Activated naive CD4-positive, alpha-beta T cell treated with anti-CD3 and anti-CD28 coated beads, Interleukin-2, amount 10 ng/mL, durations not matched to agents 7 days and 5 days (primary cell): ENCODE measurements at regions of chr12 and their contacts with region 1.

Region 1: GRCh38 chr12:93742110-93742934 is 65.1 kb downstream of the CRADD start:
- DNase-seq: peak; percentile 82
- H3K4me3 Mint-ChIP-seq: peak overlapping the region; percentile 87
- H3K27ac Mint-ChIP-seq: peak overlapping the region; percentile 98
- H3K4me1 Mint-ChIP-seq: peaks cover 65% of the 10 kb centered on the region
- H3K27me3 Mint-ChIP-seq: peaks cover 10% of the 10 kb centered on the region

Region 2: GRCh38 chr12:93569656-93570551 is 172.4 kb before region 1 on chr12:
- CTCF ChIA-PET with region 1: interaction called, 12 read pairs
- DNase-seq: peak; percentile 89
- H3K4me3 Mint-ChIP-seq: peak overlapping the region; percentile 81
- H3K27ac Mint-ChIP-seq: peak overlapping the region; percentile 93
- H3K4me1 Mint-ChIP-seq: peaks cover 39% of the 10 kb centered on the region
- H3K27me3 Mint-ChIP-seq: peaks cover 18% of the 10 kb centered on the region

Region 3: DNA sequence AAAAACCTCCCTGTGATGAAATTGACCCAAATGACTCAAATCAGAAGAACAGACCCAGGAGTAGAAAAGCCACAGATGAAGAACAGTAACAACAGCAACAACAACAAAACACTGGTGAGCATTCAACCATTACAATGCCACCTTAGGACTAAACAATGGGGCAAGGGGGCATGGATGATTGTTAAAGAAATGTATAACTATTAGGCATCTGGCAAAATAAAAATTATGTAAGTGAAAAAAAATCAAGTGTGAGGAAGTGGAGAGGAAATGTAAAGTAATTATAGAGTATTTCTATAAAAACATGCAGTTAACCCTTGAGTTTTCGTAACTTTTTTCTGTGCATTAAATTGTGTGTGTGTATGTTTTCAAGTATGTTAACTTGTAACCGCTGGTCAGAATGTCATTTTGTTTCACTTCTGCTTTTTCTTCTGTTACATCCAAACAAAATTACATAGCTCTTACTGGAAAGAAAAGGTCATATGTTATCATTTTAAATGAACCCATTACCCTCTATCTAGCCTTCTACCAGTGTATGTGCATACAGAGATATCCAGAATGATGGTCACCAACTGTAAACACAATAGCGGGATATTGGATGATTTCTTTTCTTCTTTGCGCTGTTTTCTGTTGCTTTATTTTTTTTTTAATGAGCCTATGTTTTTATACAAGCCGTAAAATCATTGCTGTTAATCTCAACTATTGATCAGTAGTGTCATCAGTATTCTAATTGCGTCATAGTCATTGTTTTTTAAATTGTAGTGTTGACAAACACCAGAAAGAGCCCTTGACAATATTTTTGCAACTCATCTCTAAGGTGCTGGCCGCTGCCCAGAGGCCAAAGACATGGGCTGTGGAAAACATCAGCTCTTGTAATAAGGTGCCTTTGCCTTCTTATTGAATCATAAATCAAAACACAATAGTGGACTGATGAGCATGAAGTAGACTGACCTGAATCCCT is 105.5 kb after region 1 on chr12:
- CTCF ChIA-PET with region 1: no interaction called
- DNase-seq: no peak
- H3K4me3 Mint-ChIP-seq: no peak overlapping the region
- H3K27ac Mint-ChIP-seq: peak overlapping the region; percentile 86
- H3K4me1 Mint-ChIP-seq: peaks cover 58% of the 10 kb centered on the region
- H3K27me3 Mint-ChIP-seq: no peaks in the 10 kb centered on the region